Keratinocyte (primary cell): ENCODE measurements at regions of chr3 and their contacts with region 1.

Region 1: DNA sequence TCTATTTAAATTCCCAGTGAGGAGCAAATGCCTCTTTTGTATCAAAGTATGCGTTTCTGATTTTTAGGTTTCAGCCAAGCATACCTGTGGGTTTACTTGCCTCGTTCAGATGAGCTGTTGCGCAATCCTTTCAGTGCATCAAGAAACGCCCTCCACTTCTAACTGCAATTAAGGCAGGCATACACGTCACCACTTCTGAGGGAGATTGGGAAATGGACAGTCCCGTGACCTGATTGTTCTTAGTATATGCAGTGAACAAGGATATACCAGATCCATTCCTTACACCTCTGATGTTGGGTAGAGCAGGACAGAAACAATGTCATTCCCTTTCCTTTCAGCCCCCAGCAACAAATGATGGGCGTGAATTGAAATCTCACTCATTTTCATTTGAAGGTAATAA is 219.0 kb downstream of the ITPR1 start:
- DNase-seq: peak; percentile 88
- H3K4me3 ChIP-seq: peak overlapping the region in 2 of 3 experiments; percentile 9 to 44
- H3K27ac ChIP-seq: peak overlapping the region; percentile 78
- H3K4me1 ChIP-seq: peaks cover 14% of the 10 kb centered on the region
- H3K27me3 ChIP-seq: no peaks in the 10 kb centered on the region
- CTCF ChIP-seq: no peak

Region 2: GRCh38 chr3:4986782-4987537 is 274.8 kb after region 1 on chr3:
- dilution Hi-C with region 1: loop called (anchors 10 kb)
- DNase-seq: no peak
- H3K4me3 ChIP-seq: peak overlapping the region in 2 of 3 experiments; percentile 36 to 52
- H3K27ac ChIP-seq: peak overlapping the region; percentile 88
- H3K4me1 ChIP-seq: peaks cover 59% of the 10 kb centered on the region
- H3K27me3 ChIP-seq: no peaks in the 10 kb centered on the region
- CTCF ChIP-seq: no peak